ENCODE measurements at regions of chrX and their contacts with region 1.

Region 1: GRCh38 chrX:49172280-49172780 is 632 bp downstream of the PLP2 start:
- DNase-seq: peak; percentile 85
- H3K4me3 Mint-ChIP-seq: peak overlapping the region; percentile 84
- H3K27ac Mint-ChIP-seq: peak overlapping the region; percentile 89
- H3K4me1 Mint-ChIP-seq: peaks cover 52% of the 10 kb centered on the region
- H3K27me3 Mint-ChIP-seq: no peaks in the 10 kb centered on the region

Region 2: GRCh38 chrX:49155900-49156837 is 16.2 kb before region 1 on chrX:
- CTCF ChIA-PET with region 1: interaction called, 18 read pairs
- POLR2A ChIA-PET with region 1: interaction called, 4 read pairs
- DNase-seq: peak; percentile 87
- H3K4me3 Mint-ChIP-seq: peak overlapping the region; percentile 89
- H3K27ac Mint-ChIP-seq: peak overlapping the region; percentile 94
- H3K4me1 Mint-ChIP-seq: peaks cover 18% of the 10 kb centered on the region
- H3K27me3 Mint-ChIP-seq: no peaks in the 10 kb centered on the region

Measured in activated CD4-positive, alpha-beta memory T cell treated with anti-CD3 and anti-CD28 coated beads, Interleukin-2, amount 10 ng/mL, durations not matched to agents 7 days and 5 days (primary cell).